CD14-positive monocyte (primary cell): ENCODE measurements at regions of chr6 and their contacts with region 1.

Region 1: GRCh38 chr6:129672881-129673643 is 36.9 kb downstream of the ARHGAP18 start:
- DNase-seq: peak; percentile 50 to 73 (median 66)
- H3K4me3 ChIP-seq: peak overlapping the region in 1 of 3 experiments; percentile 49
- H3K4me3 Mint-ChIP-seq: no peak overlapping the region
- H3K27ac ChIP-seq: peak overlapping the region in 1 of 2 donors; percentile 88
- H3K27ac Mint-ChIP-seq: peak overlapping the region; percentile 92 to 99 (median 96)
- H3K4me1 ChIP-seq: peaks cover 28 to 33% of the 10 kb centered on the region in 2 donors
- H3K4me1 Mint-ChIP-seq: peaks cover 30% of the 10 kb centered on the region
- H3K27me3 ChIP-seq: no peaks in the 10 kb centered on the region
- H3K27me3 Mint-ChIP-seq: peaks cover 0 to 2% (median 1%) of the 10 kb centered on the region in 3 donors
- CTCF ChIP-seq: no peak

Region 2: DNA sequence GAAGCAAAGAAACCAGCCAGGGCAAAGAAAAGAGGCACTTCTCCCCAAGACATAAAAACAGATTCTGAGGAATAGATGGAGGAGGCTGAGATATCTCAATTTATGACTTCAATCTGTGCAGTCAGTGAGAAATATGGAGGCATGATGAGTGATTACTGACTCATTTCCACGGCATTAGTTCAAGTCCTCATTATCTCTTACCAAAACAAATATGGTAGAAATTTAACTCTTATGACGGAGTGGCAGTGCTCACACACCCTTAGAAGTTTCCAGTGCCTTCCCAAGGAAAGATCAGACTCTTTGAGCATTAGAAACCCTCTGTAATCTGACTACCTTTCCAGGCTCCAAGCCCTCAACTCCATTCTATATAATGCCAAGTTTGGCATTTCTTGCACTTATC is 327.2 kb before region 1 on chr6:
- intact Hi-C with region 1: no loop called
- DNase-seq: no peak
- H3K4me3 ChIP-seq: no peak overlapping the region
- H3K4me3 Mint-ChIP-seq: no peak overlapping the region
- H3K27ac ChIP-seq: no peak overlapping the region
- H3K27ac Mint-ChIP-seq: peak overlapping the region in 1 of 7 donors; percentile 15
- H3K4me1 ChIP-seq: no peaks in the 10 kb centered on the region
- H3K4me1 Mint-ChIP-seq: no peaks in the 10 kb centered on the region
- H3K27me3 ChIP-seq: no peaks in the 10 kb centered on the region
- H3K27me3 Mint-ChIP-seq: peaks cover 0 to 1% (median 1%) of the 10 kb centered on the region in 3 donors
- CTCF ChIP-seq: no peak

Region 3: GRCh38 chr6:129661536-129662405 is 11.3 kb before region 1 on chr6:
- intact Hi-C with region 1: no loop called
- DNase-seq: no peak
- H3K4me3 ChIP-seq: no peak overlapping the region
- H3K4me3 Mint-ChIP-seq: no peak overlapping the region
- H3K27ac ChIP-seq: no peak overlapping the region
- H3K27ac Mint-ChIP-seq: no peak overlapping the region
- H3K4me1 ChIP-seq: peaks cover 0 to 5% of the 10 kb centered on the region in 2 donors
- H3K4me1 Mint-ChIP-seq: peaks cover 9% of the 10 kb centered on the region
- H3K27me3 ChIP-seq: no peaks in the 10 kb centered on the region
- H3K27me3 Mint-ChIP-seq: peaks cover 0 to 3% (median 0%) of the 10 kb centered on the region in 3 donors
- CTCF ChIP-seq: no peak

Region 4: GRCh38 chr6:129709769-129710449 is 36.8 kb after region 1 on chr6 and contains the start of gene ARHGAP18:
- intact Hi-C with region 1: loop called in 1 of 2 experiments (anchors 5 kb)
- DNase-seq: peak; percentile 80 to 91 (median 84)
- H3K4me3 ChIP-seq: peak within 1 kb of the TSS; percentile 69 to 95 (median 90)
- H3K4me3 Mint-ChIP-seq: peak within 1 kb of the TSS; percentile 93 to 99
- H3K27ac ChIP-seq: peak within 1 kb of the TSS; percentile 66 to 91
- H3K27ac Mint-ChIP-seq: peak within 1 kb of the TSS; percentile 94 to 99 (median 96)
- H3K4me1 ChIP-seq: peaks cover 14 to 28% of the 10 kb centered on the region in 2 donors
- H3K4me1 Mint-ChIP-seq: peaks cover 35% of the 10 kb centered on the region
- H3K27me3 ChIP-seq: no peaks in the 10 kb centered on the region
- H3K27me3 Mint-ChIP-seq: peaks cover 3 to 6% (median 3%) of the 10 kb centered on the region in 3 donors
- CTCF ChIP-seq: no peak
- polyA plus RNA-seq, gene ARHGAP18: 3.7 to 5.6 (median 3.8) TPM

Region 5: DNA sequence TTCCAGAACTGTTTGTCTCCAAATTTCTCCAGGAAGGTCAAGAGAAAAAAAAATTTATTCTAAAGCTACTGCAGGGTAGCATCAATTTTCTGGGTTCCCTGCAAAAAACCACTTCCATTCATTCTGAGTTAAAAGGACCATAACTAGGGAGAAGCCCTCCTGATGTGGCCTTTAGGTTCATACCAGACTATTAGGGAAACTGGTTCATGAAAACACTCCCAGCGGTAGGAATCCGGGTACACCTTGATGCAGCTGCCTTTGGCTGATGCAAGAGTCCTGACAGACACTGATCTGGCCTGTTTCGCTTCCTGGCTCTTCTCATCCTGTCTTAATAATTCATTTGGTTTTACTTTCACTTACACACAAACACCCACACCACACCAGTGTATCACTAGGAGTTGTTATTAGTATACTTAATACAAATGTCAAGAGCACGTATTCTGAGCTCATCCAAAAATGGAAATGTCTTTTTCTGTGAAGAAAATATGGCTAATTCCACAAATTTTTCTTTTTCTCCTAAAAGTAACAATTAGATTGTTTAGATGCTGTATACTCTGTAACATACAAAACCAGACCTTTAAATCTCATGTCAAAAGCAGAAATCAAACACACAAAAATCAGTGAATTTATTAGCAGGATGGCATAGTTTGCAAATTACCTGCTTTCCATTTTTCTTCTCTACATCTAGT is 75.3 kb after region 1 on chr6:
- intact Hi-C with region 1: loop called in 1 of 2 experiments (anchors 5 kb)
- DNase-seq: peak; percentile 16 to 62 (median 56)
- H3K4me3 ChIP-seq: peak overlapping the region in 1 of 3 experiments; percentile 30
- H3K4me3 Mint-ChIP-seq: peak overlapping the region in 1 of 2 donors; percentile 44
- H3K27ac ChIP-seq: peak overlapping the region in 1 of 2 donors; percentile 16
- H3K27ac Mint-ChIP-seq: peak overlapping the region in 5 of 7 donors; percentile 32 to 69 (median 50)
- H3K4me1 ChIP-seq: peaks cover 34 to 46% of the 10 kb centered on the region in 2 donors
- H3K4me1 Mint-ChIP-seq: peaks cover 41% of the 10 kb centered on the region
- H3K27me3 ChIP-seq: no peaks in the 10 kb centered on the region
- H3K27me3 Mint-ChIP-seq: peaks cover 0 to 4% (median 0%) of the 10 kb centered on the region in 3 donors
- CTCF ChIP-seq: no peak